Panc1 (cell line): ENCODE measurements at regions of chr13 and their contacts with region 1.

Region 1: GRCh38 chr13:111216166-111216960 is 101.3 kb downstream of the ARHGEF7 start:
- DNase-seq: no peak
- ATAC-seq: peak; percentile 82
- H3K4me3 ChIP-seq: no peak overlapping the region
- H3K27ac ChIP-seq: no peak overlapping the region
- H3K4me1 ChIP-seq: peaks cover 4% of the 10 kb centered on the region; the same call in 1 of the 2 replicates
- H3K27me3 ChIP-seq: no peaks in the 10 kb centered on the region
- CTCF ChIP-seq: peak; percentile 37

Region 2: GRCh38 chr13:110915057-110915873 is 301.1 kb before region 1 on chr13 and contains the start of gene ANKRD10:
- CTCF ChIA-PET with region 1: interaction called, 3 read pairs
- POLR2A ChIA-PET with region 1: no interaction called
- in situ Hi-C with region 1: no loop called
- intact Hi-C with region 1: loop called (anchors 10 kb)
- DNase-seq: peak; percentile 81
- ATAC-seq: peak; percentile 89
- H3K4me3 ChIP-seq: peak within 1 kb of the TSS; percentile 63 to 81
- H3K27ac ChIP-seq: peak within 1 kb of the TSS; percentile 94
- H3K4me1 ChIP-seq: peaks cover 20% of the 10 kb centered on the region
- H3K27me3 ChIP-seq: no peaks in the 10 kb centered on the region
- CTCF ChIP-seq: peak; percentile 80
- total RNA-seq, gene ANKRD10: 76.8 TPM

Region 3: DNA sequence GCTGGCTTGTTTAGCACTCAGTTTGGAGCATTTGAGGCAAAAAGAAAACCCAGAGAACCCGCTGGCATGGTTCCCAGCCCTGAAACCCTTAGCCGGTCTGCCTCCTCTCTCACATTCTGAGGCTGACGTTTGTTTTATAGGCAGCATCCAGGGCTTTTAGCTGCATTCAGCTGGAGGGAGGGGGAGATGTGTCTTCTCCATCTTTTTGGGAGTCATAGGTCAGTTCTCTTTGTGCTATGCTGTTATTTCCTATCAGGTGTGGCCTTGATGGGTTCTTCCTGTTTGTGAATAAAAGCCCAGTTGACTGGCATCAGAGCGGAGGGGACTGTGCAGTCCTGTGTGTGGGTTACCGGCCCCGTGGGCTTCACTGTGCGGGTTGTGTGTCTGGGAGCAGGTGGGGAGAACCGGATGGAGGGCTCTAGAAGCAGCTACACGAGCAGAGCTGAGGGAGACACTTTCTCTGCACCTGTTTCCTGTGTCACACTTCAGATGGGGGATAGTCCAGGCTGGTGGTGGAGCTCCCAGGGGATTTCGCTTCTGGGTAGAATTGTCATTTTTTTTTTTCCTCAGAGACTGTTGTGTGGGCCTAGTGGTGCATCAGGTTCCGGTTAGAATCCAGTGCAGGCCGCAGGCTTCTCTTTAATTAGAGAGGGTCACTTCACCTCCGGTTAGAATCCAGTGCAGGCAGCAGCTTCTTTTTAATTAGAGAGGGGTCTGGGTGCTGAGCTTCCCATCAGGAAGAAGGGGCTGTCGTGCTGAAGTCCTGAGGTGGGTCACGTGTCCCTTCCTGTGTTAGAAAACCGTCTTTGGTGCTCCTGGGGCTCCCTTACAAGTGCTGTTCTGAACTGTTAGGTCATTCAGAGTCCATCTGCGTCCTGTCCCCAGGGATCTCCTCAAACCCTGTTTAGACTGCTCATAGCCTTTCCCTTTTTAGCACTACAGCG is 31.6 kb before region 1 on chr13:
- CTCF ChIA-PET with region 1: no interaction called
- POLR2A ChIA-PET with region 1: no interaction called
- in situ Hi-C with region 1: no loop called
- intact Hi-C with region 1: no loop called
- DNase-seq: no peak
- ATAC-seq: no peak
- H3K4me3 ChIP-seq: no peak overlapping the region
- H3K27ac ChIP-seq: no peak overlapping the region
- H3K4me1 ChIP-seq: no peaks in the 10 kb centered on the region
- H3K27me3 ChIP-seq: no peaks in the 10 kb centered on the region
- CTCF ChIP-seq: no peak